Dorsolateral prefrontal cortex (tissue), 120 donors: ENCODE measurements at regions of chr7 and their contacts with region 1.

Region 1: GRCh38 chr7:105268511-105269392 is 120.0 kb downstream of the SRPK2 start:
- DNase-seq: peak in 2 of 10 donors; percentile 14 to 17
- H3K4me3 ChIP-seq: peak overlapping the region; percentile 46 to 86 (median 72)
- H3K27ac ChIP-seq: peak overlapping the region; percentile 43 to 95 (median 88)
- H3K27me3 ChIP-seq: no peaks in the 10 kb centered on the region
- CTCF ChIP-seq: peak in 9 of 56 donors; percentile 10 to 23 (median 14)

Region 2: DNA sequence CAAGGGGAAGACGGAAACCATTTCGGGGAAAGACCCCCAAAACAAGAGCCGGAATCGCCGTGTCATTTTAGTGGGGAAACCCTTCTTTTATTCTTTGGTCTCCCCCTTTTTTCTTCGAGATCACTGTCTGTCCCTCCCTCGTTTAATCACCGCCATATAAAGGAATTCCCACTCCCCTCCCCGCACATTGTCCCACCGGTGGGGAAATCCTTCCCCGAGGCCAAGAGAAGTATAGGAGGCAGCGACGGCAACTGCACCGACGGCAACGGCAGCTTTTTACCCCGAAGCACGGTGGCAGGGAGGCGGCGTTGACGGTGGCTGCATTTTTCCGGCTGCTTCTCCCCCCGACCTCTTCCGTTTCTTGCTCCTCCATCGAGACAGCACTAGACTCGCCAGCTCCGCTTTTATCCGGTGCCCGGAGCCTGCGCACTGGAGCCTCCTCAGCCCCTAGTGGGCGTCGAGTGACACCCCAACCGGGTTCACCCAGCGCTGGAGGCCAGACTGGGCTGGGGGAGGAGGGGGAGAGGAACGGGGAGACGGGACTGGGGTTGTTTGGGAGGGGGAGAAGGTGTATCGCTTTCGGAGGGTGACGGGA is 255.4 kb before region 1 on chr7:
- intact Hi-C with region 1: loop called in 1 of 2 experiments (anchors 10 kb)
- DNase-seq: peak; percentile 93 to 98 (median 96)
- H3K4me3 ChIP-seq: peak overlapping the region; percentile 69 to 99 (median 92)
- H3K27ac ChIP-seq: peak overlapping the region; percentile 99 to 100 (median 100)
- H3K27me3 ChIP-seq: no peaks in the 10 kb centered on the region
- CTCF ChIP-seq: peak in 42 of 56 donors; percentile 4 to 54 (median 31)

Region 3: GRCh38 chr7:105149827-105150226 is 118.9 kb before region 1 on chr7:
- intact Hi-C with region 1: loop called (anchors 2 to 10 kb)
- DNase-seq: no peak
- H3K4me3 ChIP-seq: no peak overlapping the region
- H3K27ac ChIP-seq: peak overlapping the region in 4 of 59 donors; percentile 20 to 25 (median 22)
- H3K27me3 ChIP-seq: no peaks in the 10 kb centered on the region
- CTCF ChIP-seq: no peak

Region 4: GRCh38 chr7:105202616-105203015 is 66.1 kb before region 1 on chr7:
- intact Hi-C with region 1: loop called (anchors 10 kb)
- DNase-seq: no peak
- H3K4me3 ChIP-seq: peak overlapping the region in 32 of 59 donors; percentile 0 to 53 (median 20)
- H3K27ac ChIP-seq: peak overlapping the region; percentile 50 to 98 (median 90)
- H3K27me3 ChIP-seq: no peaks in the 10 kb centered on the region
- CTCF ChIP-seq: peak in 1 of 56 donors; percentile 11

Region 5: GRCh38 chr7:105304040-105304895 is 35.5 kb after region 1 on chr7:
- intact Hi-C with region 1: loop called in 1 of 2 experiments (anchors 5 kb)
- DNase-seq: peak in 5 of 10 donors; percentile 22 to 73 (median 48)
- H3K4me3 ChIP-seq: peak overlapping the region in 57 of 59 donors; percentile 12 to 70 (median 47)
- H3K27ac ChIP-seq: peak overlapping the region; percentile 35 to 98 (median 92)
- H3K27me3 ChIP-seq: no peaks in the 10 kb centered on the region
- CTCF ChIP-seq: peak in 1 of 56 donors; percentile 21

Region 6: DNA sequence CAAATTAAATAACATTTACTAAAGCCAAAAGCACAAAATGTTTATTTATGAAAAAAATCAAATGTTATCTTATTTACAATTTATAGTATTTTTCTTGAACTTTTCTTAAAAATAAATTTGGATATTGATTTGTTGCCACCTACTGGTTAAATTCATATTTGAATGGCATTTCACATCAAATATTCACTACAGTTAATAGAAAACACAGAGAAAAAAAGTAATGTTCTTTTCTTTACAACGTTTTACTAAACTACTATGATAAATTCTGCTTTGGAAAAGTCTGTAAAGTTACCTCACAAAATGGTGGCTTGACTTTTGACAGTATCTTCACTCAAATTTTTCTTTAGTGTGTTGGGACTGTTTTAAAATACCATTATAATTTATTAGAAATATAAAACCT is 67.3 kb after region 1 on chr7:
- intact Hi-C with region 1: loop called in 1 of 2 experiments (anchors 10 kb)
- DNase-seq: no peak
- H3K4me3 ChIP-seq: no peak overlapping the region
- H3K27ac ChIP-seq: peak overlapping the region in 4 of 59 donors; percentile 12 to 29 (median 20)
- H3K27me3 ChIP-seq: no peaks in the 10 kb centered on the region
- CTCF ChIP-seq: peak; percentile 45 to 83 (median 62)

Region 7: DNA sequence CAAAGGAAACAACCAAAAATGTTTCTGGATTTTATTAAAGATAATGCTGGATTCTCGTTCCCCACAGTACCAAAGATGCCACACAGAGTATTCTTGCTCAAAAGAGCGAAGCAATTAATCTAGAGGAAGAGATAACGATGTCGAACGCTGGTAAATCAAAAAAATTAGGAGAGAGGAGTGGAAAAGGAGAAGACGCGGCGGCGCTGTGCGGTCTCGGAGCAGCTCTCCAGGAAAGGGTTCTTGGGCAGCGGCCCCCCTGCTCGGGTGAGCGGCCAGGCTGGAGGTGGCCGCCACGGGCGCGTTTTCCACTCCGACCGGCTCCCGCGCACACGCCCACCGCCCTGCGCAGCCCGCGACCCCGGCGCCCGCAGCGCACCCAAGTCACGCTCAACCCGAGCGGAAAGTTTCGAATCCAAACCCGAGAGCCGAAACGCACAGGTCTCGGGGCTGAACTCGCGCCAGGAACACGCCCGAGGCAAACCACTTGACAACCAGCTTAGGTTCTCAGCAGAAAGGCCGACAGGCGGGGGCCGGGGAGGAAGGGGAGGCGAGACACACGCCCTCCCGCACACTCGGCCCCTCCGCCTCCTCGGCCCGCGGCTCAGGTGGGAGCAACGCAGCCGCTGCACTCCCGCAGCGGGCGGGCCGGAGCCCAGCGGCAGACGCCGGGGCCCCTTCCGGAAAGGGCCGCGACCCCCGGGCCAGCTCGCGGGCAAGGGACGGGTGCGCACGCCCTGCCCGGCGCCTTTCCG is 119.0 kb after region 1 on chr7:
- intact Hi-C with region 1: loop called in 1 of 2 experiments (anchors 5 kb)
- DNase-seq: peak in 8 of 10 donors; percentile 39 to 72 (median 58)
- H3K4me3 ChIP-seq: peak overlapping the region; percentile 70 to 95 (median 86)
- H3K27ac ChIP-seq: peak overlapping the region in 29 of 59 donors; percentile 5 to 89 (median 43)
- H3K27me3 ChIP-seq: no peaks in the 10 kb centered on the region
- CTCF ChIP-seq: peak in 28 of 56 donors; percentile 8 to 51 (median 26)